Lower leg skin (tissue), 4 donors: ENCODE measurements at regions of chr5 and their contacts with region 1.

Region 1: GRCh38 chr5:133868946-133869518 is 99.4 kb downstream of the C5orf15 start:
- DNase-seq: peak; percentile 60 to 93
- H3K4me3 ChIP-seq: no peak overlapping the region
- CTCF ChIP-seq: no peak
- POLR2A ChIP-seq: no peak

Region 2: GRCh38 chr5:133119233-133119711 is 749.8 kb before region 1 on chr5:
- intact Hi-C with region 1: loop called (anchors 5 kb)
- DNase-seq: peak in 1 of 2 donors; percentile 58
- H3K4me3 ChIP-seq: no peak overlapping the region
- CTCF ChIP-seq: no peak
- POLR2A ChIP-seq: no peak

Region 3: DNA sequence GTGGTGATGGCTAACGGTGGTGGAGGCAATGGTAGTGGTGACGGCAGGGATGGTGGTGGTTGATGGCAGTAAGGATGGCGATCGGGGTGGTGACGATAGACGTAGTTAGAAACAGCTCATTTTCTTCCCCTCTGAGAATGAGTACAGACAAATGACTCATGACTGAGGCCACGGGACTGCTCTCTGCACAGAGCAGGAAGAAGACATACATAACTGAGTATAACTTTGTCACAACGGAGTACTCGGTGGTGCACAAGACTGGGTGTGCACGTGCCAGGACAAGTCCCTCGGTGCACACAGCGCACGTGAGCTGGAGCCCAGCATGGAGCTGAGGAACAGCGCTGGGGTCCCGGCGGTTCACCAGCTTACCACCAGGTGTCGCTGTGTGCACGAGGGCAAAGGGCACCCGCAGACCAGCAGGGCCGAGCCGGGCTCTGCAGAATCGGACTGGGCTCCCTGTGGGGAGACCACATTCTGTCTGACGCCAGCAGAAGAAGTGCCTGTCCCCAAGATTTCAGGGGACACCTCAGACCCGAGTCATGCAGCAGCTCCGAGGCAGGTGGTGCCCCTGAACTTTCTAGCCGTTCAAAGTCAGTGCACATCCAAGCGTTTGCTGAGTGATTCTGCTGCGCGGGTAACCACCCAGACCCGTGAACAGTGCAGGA is 445.3 kb before region 1 on chr5:
- intact Hi-C with region 1: loop called (anchors 10 kb)
- DNase-seq: peak; percentile 31 to 90
- H3K4me3 ChIP-seq: no peak overlapping the region
- CTCF ChIP-seq: no peak
- POLR2A ChIP-seq: no peak

Region 4: DNA sequence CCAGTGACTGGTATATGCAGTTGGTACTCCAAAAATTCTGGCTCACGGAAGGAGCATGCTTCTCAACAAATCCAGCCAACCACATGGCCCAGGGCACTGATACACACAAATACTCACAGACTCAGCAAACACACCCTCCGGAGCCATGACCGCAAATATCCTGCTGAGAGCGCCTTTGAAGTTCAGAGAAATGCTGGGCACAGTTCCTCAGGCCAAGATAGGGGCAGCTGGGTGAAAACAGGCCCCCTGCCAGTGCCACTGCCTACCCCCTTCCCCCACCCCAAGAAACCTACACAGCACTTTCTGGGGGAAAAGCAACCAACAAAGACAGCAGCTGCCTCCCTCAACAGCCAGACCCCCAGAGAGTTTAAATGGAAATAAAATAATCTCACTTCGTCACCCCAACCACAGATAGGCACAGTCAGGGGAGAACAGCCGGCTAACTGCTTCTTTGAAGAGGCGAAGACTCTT is 20.7 kb before region 1 on chr5:
- intact Hi-C with region 1: no loop called
- DNase-seq: peak; percentile 38 to 85
- H3K4me3 ChIP-seq: no peak overlapping the region
- CTCF ChIP-seq: no peak
- POLR2A ChIP-seq: no peak